Calu3 (cell line): ENCODE measurements at regions of chr2 and their contacts with region 1.

Region 1: GRCh38 chr2:219155054-219155644 is 5.5 kb downstream of the NHEJ1 start:
- DNase-seq: peak; percentile 60
- H3K4me3 Mint-ChIP-seq: no peak overlapping the region
- H3K27ac Mint-ChIP-seq: no peak overlapping the region
- H3K4me1 Mint-ChIP-seq: no peaks in the 10 kb centered on the region
- H3K27me3 Mint-ChIP-seq: no peaks in the 10 kb centered on the region
- CTCF ChIP-seq: peak; percentile 81

Region 2: GRCh38 chr2:218876562-218877219 is 278.5 kb before region 1 on chr2:
- CTCF ChIA-PET with region 1: no interaction called
- intact Hi-C with region 1: loop called (anchors 10 kb)
- DNase-seq: peak; percentile 82
- H3K4me3 Mint-ChIP-seq: no peak overlapping the region
- H3K27ac Mint-ChIP-seq: no peak overlapping the region
- H3K4me1 Mint-ChIP-seq: peaks cover 15% of the 10 kb centered on the region
- H3K27me3 Mint-ChIP-seq: peaks cover 65% of the 10 kb centered on the region
- CTCF ChIP-seq: peak; percentile 95

Region 3: DNA sequence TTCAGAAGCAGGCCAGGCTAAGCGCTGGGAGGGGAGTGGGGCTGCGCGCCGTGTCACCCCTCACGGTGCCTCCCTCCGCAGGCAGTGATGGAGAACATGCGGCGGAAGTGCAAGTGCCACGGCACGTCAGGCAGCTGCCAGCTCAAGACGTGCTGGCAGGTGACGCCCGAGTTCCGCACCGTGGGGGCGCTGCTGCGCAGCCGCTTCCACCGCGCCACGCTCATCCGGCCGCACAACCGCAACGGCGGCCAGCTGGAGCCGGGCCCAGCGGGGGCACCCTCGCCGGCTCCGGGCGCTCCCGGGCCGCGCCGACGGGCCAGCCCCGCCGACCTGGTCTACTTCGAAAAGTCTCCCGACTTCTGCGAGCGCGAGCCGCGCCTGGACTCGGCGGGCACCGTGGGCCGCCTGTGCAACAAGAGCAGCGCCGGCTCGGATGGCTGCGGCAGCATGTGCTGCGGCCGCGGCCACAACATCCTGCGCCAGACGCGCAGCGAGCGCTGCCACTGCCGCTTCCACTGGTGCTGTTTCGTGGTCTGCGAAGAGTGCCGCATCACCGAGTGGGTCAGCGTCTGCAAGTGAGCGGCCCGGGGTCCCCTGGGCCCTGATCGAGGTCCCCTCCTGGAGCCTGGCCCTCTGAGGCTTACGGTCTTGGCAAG is 262.3 kb before region 1 on chr2:
- CTCF ChIA-PET with region 1: no interaction called
- intact Hi-C with region 1: no loop called
- DNase-seq: peak; percentile 86
- H3K4me3 Mint-ChIP-seq: peak overlapping the region; percentile 61
- H3K27ac Mint-ChIP-seq: no peak overlapping the region
- H3K4me1 Mint-ChIP-seq: peaks cover 40% of the 10 kb centered on the region
- H3K27me3 Mint-ChIP-seq: no peaks in the 10 kb centered on the region
- CTCF ChIP-seq: peak; percentile 67

Region 4: DNA sequence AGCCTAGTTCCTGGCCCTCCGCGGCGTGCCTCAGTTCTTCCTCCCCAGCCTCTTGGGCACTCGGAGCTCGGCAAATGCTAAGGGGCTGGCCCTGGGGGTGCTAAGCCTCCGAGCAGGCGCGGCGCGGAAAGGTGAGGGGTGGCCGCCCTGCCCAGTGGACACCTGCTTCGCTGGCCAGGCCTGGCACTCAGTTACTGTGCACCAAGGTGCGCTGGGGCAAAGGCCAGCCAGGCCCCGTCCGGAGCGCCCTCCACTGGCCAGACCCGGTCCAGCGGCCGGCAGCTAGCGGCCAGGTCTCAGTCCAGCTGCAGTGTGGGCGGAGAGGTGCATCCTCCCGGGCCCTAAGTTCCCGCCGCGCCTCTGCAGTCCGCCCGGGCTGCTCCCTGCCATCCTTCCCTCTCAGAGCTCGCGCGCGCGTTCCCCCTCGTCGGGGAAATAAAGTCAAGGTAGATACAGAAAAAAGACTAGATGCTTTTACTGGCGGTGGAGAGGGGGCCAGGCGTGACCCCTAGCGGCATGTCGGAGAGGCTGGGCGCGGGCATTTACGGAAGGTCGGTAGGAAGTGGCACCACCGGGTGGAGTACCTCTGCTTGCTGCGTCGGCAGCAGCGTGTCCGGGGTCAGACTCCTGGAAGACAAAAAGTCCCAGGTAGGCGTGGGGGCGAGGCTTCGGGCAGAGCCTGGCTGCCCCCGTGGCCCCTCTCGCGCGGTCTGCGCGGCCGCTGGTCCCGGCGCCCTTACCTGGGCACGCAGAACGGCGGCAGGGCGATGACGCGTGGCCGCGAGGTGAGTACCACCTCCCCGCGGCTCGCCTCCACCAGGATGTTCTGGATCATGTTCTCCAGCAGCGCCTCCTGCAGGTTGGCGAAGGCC is 152.5 kb before region 1 on chr2:
- CTCF ChIA-PET with region 1: interaction called, 4 read pairs
- intact Hi-C with region 1: loop called (anchors 2 kb)
- DNase-seq: peak; percentile 86
- H3K4me3 Mint-ChIP-seq: peak overlapping the region; percentile 76
- H3K27ac Mint-ChIP-seq: no peak overlapping the region
- H3K4me1 Mint-ChIP-seq: peaks cover 31% of the 10 kb centered on the region
- H3K27me3 Mint-ChIP-seq: peaks cover 60% of the 10 kb centered on the region
- CTCF ChIP-seq: peak; percentile 65

Region 5: DNA sequence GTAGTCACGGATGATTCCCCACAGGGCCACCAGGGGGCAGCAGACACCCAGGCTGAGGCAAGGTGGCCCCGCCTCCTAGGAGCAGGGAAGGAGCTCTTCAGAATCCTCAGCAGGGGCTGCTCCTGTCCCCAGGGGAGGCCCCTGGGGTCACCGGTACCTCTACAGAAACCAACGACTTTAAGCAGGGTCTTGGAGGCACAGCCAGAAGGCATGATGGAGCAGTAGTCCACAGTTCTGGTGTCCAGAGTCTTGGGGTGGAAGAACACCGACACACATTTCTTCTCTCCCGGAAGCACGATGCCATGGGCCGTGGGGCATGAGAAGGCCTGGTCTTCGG is 125.4 kb before region 1 on chr2:
- CTCF ChIA-PET with region 1: interaction called, 30 read pairs
- intact Hi-C with region 1: loop called (anchors 1 kb)
- DNase-seq: peak; percentile 92
- H3K4me3 Mint-ChIP-seq: no peak overlapping the region
- H3K27ac Mint-ChIP-seq: no peak overlapping the region
- H3K4me1 Mint-ChIP-seq: no peaks in the 10 kb centered on the region
- H3K27me3 Mint-ChIP-seq: no peaks in the 10 kb centered on the region
- CTCF ChIP-seq: peak; percentile 96

Region 6: DNA sequence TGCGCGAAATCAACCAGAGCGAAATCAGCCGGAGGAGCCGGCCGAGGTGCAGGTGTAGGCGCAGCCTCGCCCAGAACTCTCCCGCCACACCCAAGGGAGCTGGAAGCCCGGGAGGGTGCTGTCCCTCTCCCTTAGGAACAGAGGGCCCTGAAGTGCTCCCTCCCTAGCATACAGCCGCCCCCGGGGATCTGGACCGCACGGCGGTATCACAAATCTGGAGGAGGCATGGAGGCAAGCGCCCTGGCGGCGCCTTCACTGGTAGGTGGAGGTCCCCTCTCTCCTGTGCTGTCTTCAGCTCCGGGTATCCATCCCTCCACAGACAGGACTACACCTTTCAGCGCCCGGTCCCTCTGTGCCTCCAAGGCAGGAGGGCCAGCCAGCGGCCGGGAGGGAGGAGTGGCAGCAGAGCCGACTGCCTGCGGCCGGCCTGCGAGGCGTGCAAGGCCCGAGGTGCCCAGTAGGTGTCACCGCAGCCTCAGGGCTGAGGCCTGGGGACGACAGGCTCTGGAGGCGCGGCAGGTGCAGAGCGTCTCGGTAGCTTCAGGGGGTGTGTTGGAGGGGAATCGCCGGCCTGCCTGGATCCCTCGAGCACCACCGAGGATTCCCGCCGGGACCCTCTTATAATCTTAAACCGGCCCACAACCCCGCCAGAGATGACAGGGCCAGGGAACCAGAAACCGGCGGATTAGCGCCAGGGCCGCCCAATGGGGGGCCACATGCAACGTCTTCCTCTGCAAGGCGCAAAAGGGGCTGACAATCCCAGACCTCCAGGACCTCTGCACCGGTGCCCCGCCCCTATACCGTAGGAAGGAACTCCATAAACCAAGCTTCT is 97.2 kb before region 1 on chr2:
- CTCF ChIA-PET with region 1: interaction called, 52 read pairs
- intact Hi-C with region 1: loop called (anchors 1 kb)
- DNase-seq: peak; percentile 93
- H3K4me3 Mint-ChIP-seq: peak overlapping the region; percentile 76
- H3K27ac Mint-ChIP-seq: no peak overlapping the region
- H3K4me1 Mint-ChIP-seq: peaks cover 36% of the 10 kb centered on the region
- H3K27me3 Mint-ChIP-seq: peaks cover 22% of the 10 kb centered on the region
- CTCF ChIP-seq: peak; percentile 91

Region 7: GRCh38 chr2:219104107-219105035 is 50.8 kb before region 1 on chr2:
- CTCF ChIA-PET with region 1: interaction called, 12 read pairs
- intact Hi-C with region 1: no loop called
- DNase-seq: peak; percentile 43
- H3K4me3 Mint-ChIP-seq: no peak overlapping the region
- H3K27ac Mint-ChIP-seq: no peak overlapping the region
- H3K4me1 Mint-ChIP-seq: no peaks in the 10 kb centered on the region
- H3K27me3 Mint-ChIP-seq: no peaks in the 10 kb centered on the region
- CTCF ChIP-seq: peak; percentile 88

Region 8: GRCh38 chr2:219269362-219270054 is 114.4 kb after region 1 on chr2:
- CTCF ChIA-PET with region 1: no interaction called
- intact Hi-C with region 1: no loop called
- DNase-seq: peak; percentile 33
- H3K4me3 Mint-ChIP-seq: no peak overlapping the region
- H3K27ac Mint-ChIP-seq: no peak overlapping the region
- H3K4me1 Mint-ChIP-seq: peaks cover 21% of the 10 kb centered on the region
- H3K27me3 Mint-ChIP-seq: no peaks in the 10 kb centered on the region
- CTCF ChIP-seq: no peak